ENCODE measurements at regions of chrX and their contacts with region 1.

Region 1: DNA sequence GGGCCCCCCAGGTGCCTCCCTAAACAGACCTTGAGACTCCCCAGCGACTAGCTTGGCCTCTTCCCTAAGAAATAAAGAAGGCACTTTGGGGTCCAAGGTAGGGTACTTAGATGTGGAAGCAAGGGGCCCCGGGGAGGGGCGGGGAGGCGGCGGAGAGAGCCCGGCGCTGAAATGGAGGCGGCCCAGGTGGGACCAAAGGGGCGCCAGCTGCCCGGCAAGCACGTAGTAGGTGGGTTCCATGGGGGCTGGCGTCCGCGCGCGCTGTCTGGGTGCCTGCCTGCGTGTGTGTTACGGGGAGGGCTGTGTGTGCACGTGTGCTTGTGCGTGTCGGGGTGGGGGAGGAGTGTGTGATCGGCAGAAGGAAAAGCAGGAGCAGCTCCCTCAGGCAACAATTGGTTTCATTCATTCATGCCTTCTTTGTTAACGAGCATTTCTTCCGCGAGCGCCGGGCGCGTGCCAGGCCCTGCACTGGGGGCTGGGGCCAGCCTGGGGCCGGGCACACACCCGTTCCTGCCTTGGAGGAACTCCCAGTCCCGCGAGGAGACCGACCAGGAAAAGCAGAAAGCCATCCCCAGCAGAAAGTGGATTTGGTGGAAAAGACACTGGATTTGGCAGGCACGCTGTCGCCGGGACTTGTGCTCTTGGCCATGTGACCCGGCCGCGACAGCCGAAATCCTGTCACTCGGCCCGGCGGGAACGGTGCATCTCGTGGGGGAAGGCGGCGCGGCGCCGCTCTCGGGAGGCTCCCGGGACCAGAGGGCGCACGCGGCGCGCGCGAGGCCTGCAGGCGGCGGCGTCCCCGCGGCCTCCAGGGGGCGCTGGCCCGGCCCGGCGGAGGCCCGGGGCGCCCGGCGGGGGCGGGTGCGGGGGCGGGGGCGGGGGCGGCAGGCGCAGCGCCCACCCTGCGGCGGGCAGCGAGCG is 3.3 kb upstream of the DUSP9 start:
- DNase-seq: no peak
- ATAC-seq: no peak
- H3K4me3 Mint-ChIP-seq: peak overlapping the region; percentile 63
- H3K27ac Mint-ChIP-seq: no peak overlapping the region
- H3K4me1 Mint-ChIP-seq: peaks cover 10% of the 10 kb centered on the region
- H3K27me3 Mint-ChIP-seq: peaks cover 73% of the 10 kb centered on the region
- CTCF ChIP-seq: no peak

Region 2: GRCh38 chrX:153554519-153555167 is 89.0 kb before region 1 on chrX:
- CTCF ChIA-PET with region 1: interaction called, 15 read pairs
- POLR2A ChIA-PET with region 1: no interaction called
- DNase-seq: peak; percentile 74
- ATAC-seq: peak; percentile 84
- H3K4me3 Mint-ChIP-seq: no peak overlapping the region
- H3K27ac Mint-ChIP-seq: no peak overlapping the region
- H3K4me1 Mint-ChIP-seq: no peaks in the 10 kb centered on the region
- H3K27me3 Mint-ChIP-seq: no peaks in the 10 kb centered on the region
- CTCF ChIP-seq: peak; percentile 38

Region 3: GRCh38 chrX:153582896-153583295 is 60.8 kb before region 1 on chrX:
- CTCF ChIA-PET with region 1: interaction called, 19 read pairs
- POLR2A ChIA-PET with region 1: no interaction called
- DNase-seq: no peak
- ATAC-seq: no peak
- H3K4me3 Mint-ChIP-seq: no peak overlapping the region
- H3K27ac Mint-ChIP-seq: no peak overlapping the region
- H3K4me1 Mint-ChIP-seq: peaks cover 14% of the 10 kb centered on the region
- H3K27me3 Mint-ChIP-seq: no peaks in the 10 kb centered on the region; the same call in 1 of the 2 replicates
- CTCF ChIP-seq: no peak

Region 4: GRCh38 chrX:153599192-153600031 is 44.3 kb before region 1 on chrX:
- CTCF ChIA-PET with region 1: interaction called, 10 read pairs
- POLR2A ChIA-PET with region 1: no interaction called
- DNase-seq: peak; percentile 77
- ATAC-seq: peak; percentile 92
- H3K4me3 Mint-ChIP-seq: peak overlapping the region; percentile 69
- H3K27ac Mint-ChIP-seq: no peak overlapping the region
- H3K4me1 Mint-ChIP-seq: peaks cover 13% of the 10 kb centered on the region
- H3K27me3 Mint-ChIP-seq: peaks cover 4% of the 10 kb centered on the region
- CTCF ChIP-seq: no peak

Region 5: GRCh38 chrX:153609917-153610428 is 33.7 kb before region 1 on chrX:
- CTCF ChIA-PET with region 1: interaction called, 22 read pairs
- POLR2A ChIA-PET with region 1: no interaction called
- DNase-seq: peak; percentile 87
- ATAC-seq: peak; percentile 94
- H3K4me3 Mint-ChIP-seq: peak overlapping the region; percentile 64
- H3K27ac Mint-ChIP-seq: no peak overlapping the region
- H3K4me1 Mint-ChIP-seq: no peaks in the 10 kb centered on the region
- H3K27me3 Mint-ChIP-seq: peaks cover 52% of the 10 kb centered on the region
- CTCF ChIP-seq: peak; percentile 59

Region 6: GRCh38 chrX:153662266-153662665 is 18.6 kb after region 1 on chrX:
- CTCF ChIA-PET with region 1: interaction called, 153 read pairs
- POLR2A ChIA-PET with region 1: interaction called, 3 read pairs
- DNase-seq: peak; percentile 75
- ATAC-seq: peak; percentile 81
- H3K4me3 Mint-ChIP-seq: peak overlapping the region; percentile 50
- H3K27ac Mint-ChIP-seq: no peak overlapping the region
- H3K4me1 Mint-ChIP-seq: no peaks in the 10 kb centered on the region; the same call in 1 of the 2 replicates
- H3K27me3 Mint-ChIP-seq: peaks cover 48% of the 10 kb centered on the region
- CTCF ChIP-seq: peak; percentile 30

Region 7: DNA sequence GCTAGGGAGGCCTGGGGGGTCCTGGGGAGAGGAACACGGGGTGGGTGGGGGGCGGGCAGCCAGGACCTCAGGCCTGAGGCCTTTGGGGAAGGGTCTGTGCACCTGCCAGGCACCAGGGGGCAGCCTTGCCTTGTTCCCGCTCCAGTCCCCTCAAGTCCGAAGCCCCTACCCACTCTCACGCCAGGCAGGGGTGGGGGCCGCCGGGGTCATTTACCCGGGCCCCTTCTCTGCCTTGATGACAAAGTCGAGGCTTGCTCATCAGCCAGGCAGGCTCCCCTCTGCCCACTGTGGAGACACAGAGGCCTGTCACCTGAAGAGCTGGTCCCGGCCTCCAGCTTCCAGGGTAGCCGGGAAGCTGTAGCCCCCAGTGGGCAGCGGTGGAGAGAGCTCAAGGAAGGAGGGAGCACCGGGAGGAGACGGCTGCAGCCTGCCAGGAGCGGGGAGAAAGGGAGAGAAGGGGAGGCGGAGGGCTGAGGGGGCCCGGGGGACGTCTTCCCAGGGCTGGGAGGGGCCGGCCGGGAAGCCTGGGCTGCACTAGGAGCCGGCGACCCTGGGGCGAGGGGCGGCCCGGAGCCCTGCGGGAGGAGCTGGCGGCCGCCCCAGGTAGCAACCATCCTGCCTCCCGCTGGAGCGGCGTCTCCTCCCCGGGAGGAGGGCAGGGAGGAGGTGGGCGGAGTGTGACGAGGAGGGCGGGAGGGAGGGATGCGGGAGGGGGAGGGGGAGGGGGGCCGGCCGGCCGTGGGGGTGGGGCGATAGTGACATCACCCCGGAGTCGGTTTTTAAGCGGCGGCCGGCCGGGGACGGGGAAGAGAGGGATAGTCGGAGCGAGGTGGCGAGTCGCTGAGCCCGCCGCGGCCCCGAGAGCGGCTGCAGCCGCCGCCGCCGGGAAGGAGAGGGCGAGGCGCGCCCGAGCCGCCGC is 43.7 kb after region 1 on chrX and contains the start of gene SLC6A8:
- CTCF ChIA-PET with region 1: interaction called, 14 read pairs
- POLR2A ChIA-PET with region 1: no interaction called
- DNase-seq: peak; percentile 65
- ATAC-seq: peak; percentile 38
- H3K4me3 Mint-ChIP-seq: peak within 1 kb of the TSS; percentile 61
- H3K27ac Mint-ChIP-seq: peak within 1 kb of the TSS; percentile 85
- H3K4me1 Mint-ChIP-seq: peaks cover 18% of the 10 kb centered on the region
- H3K27me3 Mint-ChIP-seq: no peaks in the 10 kb centered on the region; the same call in 1 of the 2 replicates
- CTCF ChIP-seq: peak; percentile 31; the same call in 1 of the 2 replicates
- total RNA-seq, gene SLC6A8: 102 to 112 TPM (median 110 TPM) in 3 replicates

Measured in WTC11 (cell line).